HEK293 (cell line): ENCODE measurements at regions of chr17 and their contacts with region 1.

Region 1: GRCh38 chr17:57987580-57988421 is at the start of gene VEZF1:
- H3K4me3 ChIP-seq: peak within 1 kb of the TSS; percentile 89
- H3K27ac ChIP-seq: peak within 1 kb of the TSS; percentile 97
- H3K4me1 ChIP-seq: peaks cover 33% of the 10 kb centered on the region
- CTCF ChIP-seq: no peak

Region 2: DNA sequence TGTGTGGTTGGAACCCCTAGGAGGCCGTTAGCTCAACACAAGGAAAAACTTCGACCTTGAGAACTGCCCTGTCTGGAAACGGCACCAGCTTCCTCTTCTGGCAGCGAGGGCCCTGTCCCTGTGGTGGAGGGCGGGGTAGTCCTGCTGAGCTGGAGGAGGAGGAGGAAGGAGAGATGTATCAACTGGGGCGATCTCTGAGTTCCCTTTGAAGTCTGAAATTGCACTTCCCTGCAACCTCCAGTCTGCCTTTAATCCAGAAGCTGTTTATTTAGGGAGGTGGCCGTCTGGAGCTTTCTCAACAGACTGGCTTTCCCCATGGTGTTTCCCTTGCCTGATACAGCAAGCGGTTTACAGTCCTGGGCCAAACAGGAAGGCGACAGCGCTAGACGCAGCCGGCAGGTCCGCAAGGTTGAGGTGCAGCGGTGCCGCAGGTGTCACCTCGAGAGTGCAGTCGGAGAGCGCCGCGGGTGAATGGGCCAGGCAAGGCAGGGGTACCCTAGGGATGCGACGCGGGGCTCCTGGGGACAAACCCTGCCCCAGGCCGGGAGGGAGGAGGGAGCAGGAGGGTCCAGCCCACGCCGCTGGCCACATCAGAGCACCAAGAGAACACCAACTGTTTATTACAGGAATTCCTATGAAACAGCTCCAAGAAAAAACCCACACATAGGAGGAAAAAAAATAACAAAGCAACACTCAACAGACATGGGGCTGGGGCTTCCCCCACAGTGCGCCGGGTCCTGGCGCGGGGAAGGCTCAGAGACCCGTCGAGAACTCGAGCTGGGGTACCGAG is 126.6 kb before region 1 on chr17:
- CTCF ChIA-PET with region 1: interaction called, 434 read pairs
- POLR2A ChIA-PET with region 1: interaction called, 9 read pairs
- H3K4me3 ChIP-seq: no peak overlapping the region
- H3K27ac ChIP-seq: peak overlapping the region; percentile 38; the same call in 1 of the 2 replicates
- H3K4me1 ChIP-seq: peaks cover 4% of the 10 kb centered on the region; the same call in 1 of the 2 replicates
- CTCF ChIP-seq: no peak

Region 3: GRCh38 chr17:57875309-57876115 is 112.3 kb before region 1 on chr17:
- CTCF ChIA-PET with region 1: interaction called, 13 read pairs
- POLR2A ChIA-PET with region 1: interaction called, 15 read pairs
- H3K4me3 ChIP-seq: no peak overlapping the region
- H3K27ac ChIP-seq: peak overlapping the region; percentile 87
- H3K4me1 ChIP-seq: peaks cover 21% of the 10 kb centered on the region
- CTCF ChIP-seq: peak; percentile 65

Region 4: GRCh38 chr17:57946798-57947358 is 40.9 kb before region 1 on chr17:
- CTCF ChIA-PET with region 1: interaction called, 16 read pairs
- POLR2A ChIA-PET with region 1: interaction called, 4 read pairs
- H3K4me3 ChIP-seq: no peak overlapping the region
- H3K27ac ChIP-seq: no peak overlapping the region
- H3K4me1 ChIP-seq: peaks cover 52% of the 10 kb centered on the region
- CTCF ChIP-seq: no peak

Region 5: DNA sequence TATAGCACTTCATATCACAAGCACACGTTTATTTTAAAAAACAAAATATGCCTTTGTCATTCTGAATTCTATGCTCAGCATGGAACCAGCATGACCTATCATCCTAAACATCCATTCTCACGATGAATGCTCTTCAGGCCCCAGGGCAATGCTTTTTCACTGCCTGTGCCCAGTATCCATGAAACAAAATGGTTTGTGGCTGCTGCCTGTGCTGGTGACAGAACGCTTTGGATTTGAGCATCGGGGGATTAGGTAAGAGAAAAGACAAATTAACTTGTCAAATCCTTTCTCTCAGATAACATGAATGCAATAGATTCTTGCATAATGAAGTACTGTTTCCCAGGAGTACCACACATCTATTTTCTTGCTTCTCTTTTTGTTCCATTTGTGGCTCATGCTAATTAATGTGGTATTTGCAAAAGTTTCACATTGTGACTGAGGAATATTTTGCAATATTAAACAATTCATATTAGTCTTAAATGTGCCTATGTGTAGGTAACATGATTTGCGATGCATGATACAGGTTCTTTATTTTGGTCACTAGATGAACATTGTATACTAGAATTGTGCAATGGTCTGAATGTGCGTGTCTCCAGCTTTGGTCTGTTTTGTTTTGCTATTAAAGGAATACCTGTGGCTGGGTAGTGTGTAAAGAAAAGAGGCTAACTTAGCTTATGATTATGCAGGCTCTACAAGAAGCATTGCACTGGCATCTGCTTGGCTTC is 45.1 kb after region 1 on chr17:
- CTCF ChIA-PET with region 1: no interaction called
- POLR2A ChIA-PET with region 1: no interaction called
- H3K4me3 ChIP-seq: no peak overlapping the region
- H3K27ac ChIP-seq: no peak overlapping the region
- H3K4me1 ChIP-seq: no peaks in the 10 kb centered on the region
- CTCF ChIP-seq: no peak

Region 6: DNA sequence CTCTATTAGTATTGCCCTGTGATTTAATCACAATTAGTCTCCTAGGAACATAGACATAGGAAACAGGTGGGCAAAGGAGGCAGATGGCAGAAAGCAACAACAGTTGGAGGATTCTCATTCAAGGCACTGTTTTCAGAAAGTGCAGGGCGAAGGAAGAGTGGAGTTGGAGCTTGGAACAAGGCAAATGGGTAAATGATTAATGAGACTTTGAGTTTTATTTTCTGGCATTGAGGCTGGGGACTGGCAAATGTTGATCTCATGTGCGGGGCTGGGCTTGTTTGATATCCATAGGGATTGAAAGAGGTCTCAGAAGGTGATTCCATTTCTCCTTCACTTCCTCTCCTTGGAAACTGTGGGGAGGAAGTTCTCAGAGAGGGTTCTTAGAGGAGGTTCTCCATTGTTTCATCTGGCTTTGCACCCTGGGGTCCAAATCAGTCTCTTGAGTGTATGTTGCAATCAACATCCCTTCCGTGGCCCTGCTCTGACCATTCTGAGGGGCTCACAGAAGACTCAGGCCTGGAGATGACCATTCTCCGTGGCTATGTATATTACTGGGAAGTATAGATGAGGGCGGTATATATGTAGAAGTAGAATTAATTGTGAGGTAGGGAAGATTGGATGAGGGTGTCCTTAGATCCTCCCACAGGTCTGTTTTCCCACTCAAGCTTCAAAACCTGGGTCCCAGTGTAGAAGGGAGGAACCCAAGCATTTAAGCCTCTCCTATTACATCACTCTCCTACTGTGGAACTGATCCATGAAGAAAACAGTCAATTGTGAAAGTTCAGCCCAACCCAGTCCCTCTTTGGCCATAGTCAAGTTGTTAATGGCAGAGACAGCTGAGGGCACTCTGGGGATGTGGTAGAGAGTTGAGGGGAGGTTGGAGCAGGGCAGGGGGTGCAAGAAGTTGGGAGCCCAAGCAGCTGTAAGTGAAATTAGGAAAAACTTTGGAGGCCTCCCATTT is 55.7 kb after region 1 on chr17:
- CTCF ChIA-PET with region 1: no interaction called
- POLR2A ChIA-PET with region 1: no interaction called
- H3K4me3 ChIP-seq: no peak overlapping the region
- H3K27ac ChIP-seq: no peak overlapping the region
- H3K4me1 ChIP-seq: no peaks in the 10 kb centered on the region
- CTCF ChIP-seq: no peak